Heart right ventricle (tissue), 16 donors: ENCODE measurements at regions of chr2 and their contacts with region 1.

Region 1: GRCh38 chr2:188978291-188979081 is 4.3 kb downstream of the COL3A1 start:
- DNase-seq: peak in 1 of 2 donors; percentile 42
- ATAC-seq: peak; percentile 32 to 68 (median 56)
- H3K4me3 ChIP-seq: peak overlapping the region in 9 of 10 donors; percentile 15 to 60 (median 53)
- H3K27ac ChIP-seq: peak overlapping the region in 9 of 10 donors; percentile 20 to 87 (median 80)
- H3K4me1 ChIP-seq: peaks cover 0 to 3% (median 0%) of the 10 kb centered on the region in 9 donors
- H3K27me3 ChIP-seq: no peaks in the 10 kb centered on the region
- CTCF ChIP-seq: peak in 7 of 9 donors; percentile 10 to 61 (median 45)

Region 2: GRCh38 chr2:187429989-187430388 is 1548.5 kb before region 1 on chr2:
- intact Hi-C with region 1: no loop called
- DNase-seq: no peak
- ATAC-seq: peak in 4 of 8 donors; percentile 37 to 85 (median 70)
- H3K4me3 ChIP-seq: no peak overlapping the region
- H3K27ac ChIP-seq: peak overlapping the region in 6 of 10 donors; percentile 1 to 71 (median 32)
- H3K4me1 ChIP-seq: peaks cover 0 to 67% (median 28%) of the 10 kb centered on the region in 9 donors
- H3K27me3 ChIP-seq: no peaks in the 10 kb centered on the region
- CTCF ChIP-seq: no peak

Region 3: GRCh38 chr2:188524519-188525113 is 453.9 kb before region 1 on chr2:
- intact Hi-C with region 1: loop called in 7 of 10 experiments (anchors 5 to 10 kb)
- DNase-seq: peak in 1 of 2 donors; percentile 13
- ATAC-seq: no peak
- H3K4me3 ChIP-seq: no peak overlapping the region
- H3K27ac ChIP-seq: no peak overlapping the region
- H3K4me1 ChIP-seq: peaks cover 0 to 14% (median 0%) of the 10 kb centered on the region in 9 donors
- H3K27me3 ChIP-seq: no peaks in the 10 kb centered on the region
- CTCF ChIP-seq: peak; percentile 60 to 92 (median 75)

Region 4: GRCh38 chr2:188598551-188598950 is 379.9 kb before region 1 on chr2:
- intact Hi-C with region 1: loop called in 1 of 10 experiments (anchors 10 kb)
- DNase-seq: peak in 1 of 2 donors; percentile 42
- ATAC-seq: peak in 5 of 8 donors; percentile 55 to 74 (median 64)
- H3K4me3 ChIP-seq: no peak overlapping the region
- H3K27ac ChIP-seq: peak overlapping the region in 6 of 10 donors; percentile 13 to 65 (median 25)
- H3K4me1 ChIP-seq: peaks cover 0 to 16% (median 0%) of the 10 kb centered on the region in 9 donors
- H3K27me3 ChIP-seq: no peaks in the 10 kb centered on the region
- CTCF ChIP-seq: no peak

Region 5: DNA sequence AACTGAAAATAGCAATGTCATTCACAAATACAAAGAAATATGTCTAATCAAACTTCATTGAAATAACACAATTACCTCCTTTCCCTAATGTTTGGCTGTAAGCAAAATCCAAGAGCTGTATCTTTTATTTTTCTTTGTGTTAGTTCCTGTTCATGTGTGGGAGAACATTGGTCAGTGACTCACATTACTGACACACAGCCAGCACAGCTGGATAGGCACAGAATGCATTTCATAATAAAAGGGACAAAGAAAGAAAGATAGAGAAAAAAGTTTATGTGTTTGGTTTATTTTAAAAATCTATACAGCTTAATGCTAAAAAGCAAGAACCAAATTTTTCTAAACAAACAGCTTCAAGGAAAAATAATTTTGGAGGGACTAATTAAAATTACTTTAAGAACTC is 189.9 kb before region 1 on chr2:
- intact Hi-C with region 1: loop called in 5 of 10 experiments (anchors 2 to 10 kb)
- DNase-seq: peak; percentile 18 to 79
- ATAC-seq: peak in 7 of 8 donors; percentile 43 to 76 (median 72)
- H3K4me3 ChIP-seq: peak overlapping the region in 4 of 10 donors; percentile 10 to 28 (median 13)
- H3K27ac ChIP-seq: peak overlapping the region; percentile 1 to 90 (median 82)
- H3K4me1 ChIP-seq: peaks cover 0 to 35% (median 19%) of the 10 kb centered on the region in 9 donors
- H3K27me3 ChIP-seq: no peaks in the 10 kb centered on the region
- CTCF ChIP-seq: no peak

Region 6: GRCh38 chr2:188937228-188938220 is 41.0 kb before region 1 on chr2:
- intact Hi-C with region 1: loop called in 2 of 10 experiments (anchors 5 kb)
- DNase-seq: no peak
- ATAC-seq: peak; percentile 41 to 81 (median 72)
- H3K4me3 ChIP-seq: no peak overlapping the region
- H3K27ac ChIP-seq: peak overlapping the region; percentile 40 to 76 (median 66)
- H3K4me1 ChIP-seq: peaks cover 0 to 19% (median 0%) of the 10 kb centered on the region in 9 donors
- H3K27me3 ChIP-seq: no peaks in the 10 kb centered on the region
- CTCF ChIP-seq: no peak